Head of caudate nucleus (tissue), 42 donors: ENCODE measurements at regions of chr10 and their contacts with region 1.

Region 1: DNA sequence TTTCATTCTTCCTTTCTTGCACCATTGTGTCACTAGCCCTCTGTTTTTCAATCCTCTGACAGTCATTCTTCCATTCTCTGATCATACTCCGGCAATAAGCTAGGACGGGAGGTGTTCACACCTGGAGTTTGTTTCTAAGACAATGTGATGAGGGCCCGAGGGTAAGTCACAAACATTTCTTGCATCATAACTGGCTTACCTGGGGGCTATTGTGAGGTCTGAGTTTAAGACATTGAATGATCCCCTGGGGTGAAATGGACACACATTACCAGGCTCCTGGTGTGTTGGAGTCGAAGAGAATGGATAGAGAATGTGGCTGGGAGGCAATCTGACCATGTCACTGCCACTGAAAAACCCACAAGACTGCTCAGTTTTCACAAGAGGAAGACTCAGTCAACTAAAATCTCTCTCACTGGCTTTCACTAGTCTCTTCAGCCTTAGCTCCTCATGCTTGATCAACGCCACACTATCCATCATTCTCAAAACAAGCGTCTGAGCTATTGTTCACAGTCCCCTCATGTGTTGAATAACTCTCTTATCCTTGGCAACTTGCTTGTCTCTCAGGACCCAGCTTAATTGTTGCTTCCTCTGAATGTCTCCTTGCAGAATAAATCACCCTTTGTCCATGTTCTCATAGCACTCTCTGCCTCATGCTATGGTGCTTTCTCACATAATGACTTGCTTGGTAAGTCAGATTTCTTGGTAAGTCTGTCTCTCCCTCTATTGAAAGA is at the start of gene C10orf120:
- DNase-seq: no peak

Region 2: DNA sequence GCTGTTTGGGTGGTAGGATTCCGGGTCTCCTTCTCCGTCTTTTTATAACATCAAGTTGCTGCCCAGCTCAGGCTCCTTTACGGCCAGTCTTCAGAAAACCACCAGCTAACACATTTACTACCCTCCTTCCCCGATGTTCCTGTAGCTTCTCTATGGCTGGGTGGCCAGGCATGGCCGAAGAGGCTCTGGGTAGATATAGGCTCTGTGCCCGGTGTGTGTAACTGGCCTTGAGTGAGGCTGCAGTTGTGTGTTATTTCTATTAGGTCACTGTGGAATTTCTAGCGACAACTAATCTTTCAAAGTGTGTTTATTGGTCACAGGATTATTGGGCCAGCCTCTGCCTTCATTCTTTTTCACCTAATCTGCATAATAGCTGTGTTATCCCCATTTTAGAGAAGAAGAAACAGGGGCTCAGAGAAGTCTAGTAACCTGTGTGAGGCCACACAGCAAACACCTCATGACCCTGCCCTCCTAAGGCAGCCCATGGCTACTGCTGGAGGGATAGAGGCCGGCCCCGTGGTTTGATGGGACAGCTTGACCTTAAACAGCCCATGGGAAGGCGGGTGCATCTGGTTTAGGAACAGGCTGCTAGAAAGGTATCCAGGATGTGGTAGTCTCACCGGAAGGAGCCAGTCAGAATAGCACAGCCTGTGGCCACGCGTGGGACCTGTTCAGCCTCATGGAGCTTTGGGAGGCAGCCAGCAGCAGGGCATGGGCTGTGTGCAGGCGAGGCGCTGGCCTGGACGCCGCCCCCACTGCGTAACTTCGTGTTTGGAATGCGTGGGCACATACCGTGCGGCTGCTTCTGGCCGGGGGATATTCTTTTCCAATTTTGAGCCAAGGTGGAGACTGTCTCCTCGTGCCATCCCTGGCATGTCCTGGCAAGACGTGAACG is 208.8 kb before region 1 on chr10:
- intact Hi-C with region 1: no loop called
- DNase-seq: peak in 2 of 42 donors; percentile 32 to 33

Region 3: GRCh38 chr10:122650331-122650730 is 49.5 kb before region 1 on chr10:
- intact Hi-C with region 1: loop called (anchors 5 kb)
- DNase-seq: no peak